Activated CD8-positive, alpha-beta T cell treated with anti-CD3 and anti-CD28 coated beads for 36 hours (primary cell): ENCODE measurements at regions of chr1 and their contacts with region 1.

Region 1: GRCh38 chr1:110645821-110646735 is 28.7 kb downstream of the KCNA3 start:
- DNase-seq: no peak
- ATAC-seq: peak; percentile 47
- H3K4me3 Mint-ChIP-seq: no peak overlapping the region
- H3K27ac Mint-ChIP-seq: no peak overlapping the region
- H3K4me1 Mint-ChIP-seq: peaks cover 52% of the 10 kb centered on the region
- H3K27me3 Mint-ChIP-seq: no peaks in the 10 kb centered on the region
- CTCF ChIP-seq: no peak

Region 2: DNA sequence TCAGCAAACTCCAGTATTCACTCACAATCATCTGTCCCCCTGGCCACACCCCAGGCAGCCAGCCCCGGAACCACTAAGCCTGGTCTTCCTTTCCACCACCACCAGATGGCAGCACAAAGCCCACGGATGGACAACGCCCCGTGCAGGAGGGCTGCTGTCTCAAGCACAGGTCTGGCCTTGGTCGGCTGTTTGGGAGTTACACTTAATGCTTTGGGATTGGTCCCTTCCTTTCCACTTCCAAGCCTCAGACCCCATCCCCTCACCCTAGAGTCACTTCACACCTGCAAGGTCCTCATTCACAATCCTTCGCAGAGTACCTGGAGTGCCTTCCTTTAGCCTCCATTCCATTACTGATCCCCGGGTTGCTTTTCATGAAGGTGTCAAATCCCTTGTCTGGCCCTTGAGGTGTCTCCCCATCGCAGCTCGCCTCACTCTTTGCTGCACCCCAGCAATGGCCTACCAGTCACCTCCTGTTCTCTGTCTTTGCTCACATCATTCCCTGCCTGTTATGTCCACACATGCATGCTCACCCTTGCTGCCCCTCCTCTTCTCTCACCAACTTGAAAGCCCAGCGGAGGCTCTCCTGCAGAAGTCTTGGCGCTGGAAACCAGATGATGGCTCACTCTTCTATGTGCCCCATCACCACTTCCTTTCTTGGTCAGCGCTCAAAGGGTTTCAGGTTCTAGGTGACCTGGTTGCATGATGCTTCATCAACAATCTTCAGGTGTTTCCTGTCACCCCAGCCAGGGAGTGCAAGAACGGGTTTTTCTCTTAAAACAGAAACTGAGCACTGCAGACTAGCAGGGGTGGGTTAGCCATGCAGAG is 15.0 kb before region 1 on chr1:
- CTCF ChIA-PET with region 1: interaction called, 66 read pairs
- POLR2A ChIA-PET with region 1: interaction called, 131 read pairs
- intact Hi-C with region 1: loop called (anchors 2 kb)
- DNase-seq: peak; percentile 89
- ATAC-seq: peak; percentile 69
- H3K4me3 Mint-ChIP-seq: no peak overlapping the region
- H3K27ac Mint-ChIP-seq: no peak overlapping the region
- H3K4me1 Mint-ChIP-seq: peaks cover 52% of the 10 kb centered on the region
- H3K27me3 Mint-ChIP-seq: no peaks in the 10 kb centered on the region
- CTCF ChIP-seq: peak; percentile 85

Region 3: GRCh38 chr1:110663241-110663640 is 17.2 kb after region 1 on chr1:
- CTCF ChIA-PET with region 1: interaction called, 13 read pairs
- POLR2A ChIA-PET with region 1: interaction called, 5 read pairs
- intact Hi-C with region 1: no loop called
- DNase-seq: no peak
- ATAC-seq: no peak
- H3K4me3 Mint-ChIP-seq: no peak overlapping the region
- H3K27ac Mint-ChIP-seq: no peak overlapping the region
- H3K4me1 Mint-ChIP-seq: peaks cover 27% of the 10 kb centered on the region
- H3K27me3 Mint-ChIP-seq: no peaks in the 10 kb centered on the region
- CTCF ChIP-seq: no peak

Region 4: GRCh38 chr1:110668549-110668948 is 22.5 kb after region 1 on chr1:
- CTCF ChIA-PET with region 1: interaction called, 19 read pairs
- POLR2A ChIA-PET with region 1: interaction called, 88 read pairs
- intact Hi-C with region 1: loop called (anchors 2 kb)
- DNase-seq: peak; percentile 48
- ATAC-seq: no peak
- H3K4me3 Mint-ChIP-seq: peak overlapping the region; percentile 68
- H3K27ac Mint-ChIP-seq: peak overlapping the region; percentile 80
- H3K4me1 Mint-ChIP-seq: peaks cover 41% of the 10 kb centered on the region
- H3K27me3 Mint-ChIP-seq: no peaks in the 10 kb centered on the region
- CTCF ChIP-seq: no peak

Region 5: GRCh38 chr1:110674337-110675059 is 28.4 kb after region 1 on chr1 and contains the start of gene KCNA3:
- CTCF ChIA-PET with region 1: interaction called, 19 read pairs
- POLR2A ChIA-PET with region 1: interaction called, 88 read pairs
- intact Hi-C with region 1: loop called (anchors 2 kb)
- DNase-seq: peak; percentile 74
- ATAC-seq: peak; percentile 28
- H3K4me3 Mint-ChIP-seq: peak within 1 kb of the TSS; percentile 100
- H3K27ac Mint-ChIP-seq: peak within 1 kb of the TSS; percentile 98
- H3K4me1 Mint-ChIP-seq: peaks cover 30% of the 10 kb centered on the region
- H3K27me3 Mint-ChIP-seq: no peaks in the 10 kb centered on the region
- CTCF ChIP-seq: peak; percentile 47
- total RNA-seq, gene KCNA3: 15.5 to 16.2 TPM